Gastrocnemius medialis (tissue), 4 donors: ENCODE measurements at regions of chr6 and their contacts with region 1.

Region 1: GRCh38 chr6:44127186-44128019 is at the starts of genes MRPL14 and TMEM63B:
- DNase-seq: peak; percentile 71 to 84
- ATAC-seq: peak; percentile 68 to 78
- H3K4me3 ChIP-seq: peak within 1 kb of the TSS; percentile 78 to 99 (median 94)
- H3K27ac ChIP-seq: peak within 1 kb of the TSS; percentile 97 to 100 (median 99)
- H3K4me1 ChIP-seq: peaks cover 52 to 59% of the 10 kb centered on the region in 2 donors
- H3K27me3 ChIP-seq: no peaks in the 10 kb centered on the region
- CTCF ChIP-seq: no peak
- POLR2A ChIP-seq: peak; percentile 91 to 93
- total RNA-seq, gene MRPL14: 100 to 180 (median 152) TPM
- total RNA-seq, gene TMEM63B: 27.2 to 71.9 (median 43.7) TPM

Region 2: DNA sequence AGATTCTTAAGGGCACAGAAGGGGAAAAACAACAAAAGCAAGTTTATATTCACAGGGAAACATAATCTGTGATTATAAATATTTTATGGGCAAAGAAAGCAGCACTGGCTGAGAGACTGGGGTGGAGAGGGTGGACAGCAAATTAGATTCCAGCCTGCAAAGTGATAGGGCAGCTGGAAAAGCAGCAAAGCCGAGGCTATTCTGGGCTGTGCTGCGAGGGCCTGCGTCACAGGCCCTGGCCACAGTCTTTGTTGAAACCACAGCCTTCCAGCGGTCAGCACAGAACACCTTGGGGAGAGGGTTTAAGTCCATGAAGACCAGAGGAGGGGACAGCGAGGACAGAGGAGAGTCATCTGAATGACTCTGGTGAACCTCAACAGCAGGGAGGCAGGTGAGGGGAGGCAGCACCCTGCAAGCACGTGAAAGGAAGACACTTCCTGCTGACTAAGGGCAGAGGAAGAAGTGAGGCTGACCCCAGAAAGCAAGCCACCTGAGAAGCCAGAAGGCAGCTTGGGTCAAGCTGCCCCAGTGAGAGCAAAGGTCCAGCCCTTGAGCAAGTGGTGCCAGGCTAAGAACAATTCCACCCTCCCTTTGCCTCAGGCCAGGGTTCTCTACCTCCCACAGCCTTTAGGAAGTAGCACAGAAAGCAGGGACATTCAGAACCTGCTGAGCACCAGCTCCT is 17.3 kb before region 1 on chr6:
- in situ Hi-C with region 1: no loop called
- intact Hi-C with region 1: loop called (anchors 1 kb)
- DNase-seq: peak; percentile 52 to 80
- ATAC-seq: peak; percentile 84
- H3K4me3 ChIP-seq: peak overlapping the region in 3 of 4 donors; percentile 2 to 26 (median 26)
- H3K27ac ChIP-seq: peak overlapping the region; percentile 88 to 100 (median 95)
- H3K4me1 ChIP-seq: peaks cover 75 to 82% of the 10 kb centered on the region in 2 donors
- H3K27me3 ChIP-seq: no peaks in the 10 kb centered on the region
- CTCF ChIP-seq: no peak
- POLR2A ChIP-seq: peak; percentile 45 to 65

Region 3: DNA sequence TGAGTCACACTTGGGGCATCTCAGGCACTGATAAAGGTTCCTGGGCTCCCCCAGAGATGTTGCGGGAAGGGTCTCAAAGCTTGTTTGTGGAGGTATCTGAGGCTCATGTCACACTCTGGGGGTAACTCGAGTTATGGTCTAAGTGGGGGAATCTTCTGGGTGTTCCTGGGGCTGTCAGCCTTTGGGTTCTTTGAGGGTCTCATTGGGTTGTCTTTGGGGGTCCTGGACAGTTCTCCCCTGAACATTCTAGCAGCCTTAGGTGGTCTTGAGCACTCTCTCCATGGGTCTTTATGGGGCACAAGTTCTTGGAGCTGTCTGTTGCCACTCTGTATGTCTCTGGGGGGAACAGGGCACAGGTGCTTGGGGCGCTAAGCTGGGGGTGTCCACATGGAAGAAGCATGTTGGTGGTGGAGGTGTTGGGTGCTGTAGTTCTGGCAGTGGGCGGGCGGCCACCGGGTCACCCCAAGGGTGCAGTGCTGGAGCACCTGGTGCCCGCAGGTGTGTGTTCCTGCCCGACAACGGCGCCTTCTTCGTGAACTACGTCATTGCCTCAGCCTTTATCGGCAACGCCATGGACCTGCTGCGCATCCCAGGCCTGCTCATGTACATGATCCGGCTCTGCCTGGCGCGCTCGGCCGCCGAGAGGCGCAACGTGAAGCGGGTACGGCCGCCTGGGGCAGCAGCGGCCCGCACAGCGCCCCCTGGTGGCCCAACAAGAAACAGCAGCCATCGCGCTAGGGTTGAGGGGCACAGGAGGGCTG is 24.1 kb after region 1 on chr6:
- in situ Hi-C with region 1: no loop called
- intact Hi-C with region 1: loop called (anchors 2 kb)
- DNase-seq: peak; percentile 38 to 68
- ATAC-seq: peak; percentile 78 to 83
- H3K4me3 ChIP-seq: no peak overlapping the region
- H3K27ac ChIP-seq: no peak overlapping the region
- H3K4me1 ChIP-seq: peaks cover 0 to 3% of the 10 kb centered on the region in 2 donors
- H3K27me3 ChIP-seq: no peaks in the 10 kb centered on the region
- CTCF ChIP-seq: peak; percentile 95 to 100 (median 99)
- POLR2A ChIP-seq: no peak

Region 4: GRCh38 chr6:44257025-44257752 is 129.8 kb after region 1 on chr6 and contains the start of gene SLC35B2:
- in situ Hi-C with region 1: no loop called
- intact Hi-C with region 1: no loop called
- DNase-seq: peak in 1 of 2 donors; percentile 58
- ATAC-seq: peak; percentile 73 to 81
- H3K4me3 ChIP-seq: peak within 1 kb of the TSS; percentile 77 to 99 (median 88)
- H3K27ac ChIP-seq: peak within 1 kb of the TSS; percentile 87 to 97 (median 92)
- H3K4me1 ChIP-seq: peaks cover 8 to 12% of the 10 kb centered on the region in 2 donors
- H3K27me3 ChIP-seq: no peaks in the 10 kb centered on the region
- CTCF ChIP-seq: peak; percentile 54 to 99 (median 90)
- POLR2A ChIP-seq: peak; percentile 75 to 77
- total RNA-seq, gene SLC35B2: 14.9 to 35.9 (median 21.4) TPM